Ascending aorta (tissue), 2 donors: ENCODE measurements at regions of chr15 and their contacts with region 1.

Region 1: DNA sequence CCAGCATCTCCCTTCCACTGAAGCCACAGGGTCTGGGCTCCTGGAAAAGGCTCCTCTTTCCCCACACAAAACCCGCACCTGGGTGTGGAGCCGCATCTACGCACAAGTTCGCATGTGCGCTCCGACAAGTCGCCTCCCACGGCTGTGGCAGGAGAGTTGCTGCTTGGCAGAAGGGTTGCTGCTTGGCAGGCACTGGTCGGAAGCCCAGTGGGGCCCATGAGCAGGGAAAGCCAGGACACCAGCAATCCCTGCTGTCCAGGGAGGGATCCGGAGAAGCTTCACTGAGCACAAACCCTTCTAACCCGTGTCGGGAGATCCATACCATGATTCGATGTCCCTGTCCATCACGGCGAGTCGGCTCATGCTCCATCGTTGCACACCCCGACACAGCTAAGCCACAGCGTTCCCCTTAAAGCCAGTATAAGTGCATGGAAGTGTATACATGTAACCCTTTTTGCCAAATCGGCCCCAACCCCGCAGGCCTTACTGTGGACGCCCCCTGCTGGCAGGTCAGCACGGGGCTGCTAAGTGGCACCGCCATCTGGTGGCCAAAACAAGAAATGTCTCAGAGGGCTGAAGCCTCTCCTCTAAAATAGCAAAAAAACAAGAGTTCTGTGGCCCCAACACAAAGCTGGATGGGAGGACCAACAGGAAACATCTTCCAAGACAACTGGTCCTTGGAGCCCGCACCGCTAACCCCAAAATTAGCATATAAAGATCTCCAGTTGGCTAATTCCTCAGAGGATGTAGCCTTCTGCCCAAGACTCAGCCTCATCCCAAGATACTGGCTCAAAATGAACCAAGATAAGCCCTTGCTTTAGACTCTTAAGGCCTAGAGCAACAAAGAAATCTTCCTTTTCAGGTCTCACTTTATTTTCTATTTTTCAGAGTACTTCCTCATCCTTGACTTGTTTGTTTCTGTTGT is 8.3 kb downstream of the ANKRD63 start:
- DNase-seq: peak; percentile 31 to 89
- H3K4me3 ChIP-seq: no peak overlapping the region
- H3K27ac ChIP-seq: no peak overlapping the region
- H3K4me1 ChIP-seq: peaks cover 2% of the 10 kb centered on the region in 2 donors
- H3K27me3 ChIP-seq: peaks cover 2% of the 10 kb centered on the region
- CTCF ChIP-seq: peak; percentile 100

Region 2: DNA sequence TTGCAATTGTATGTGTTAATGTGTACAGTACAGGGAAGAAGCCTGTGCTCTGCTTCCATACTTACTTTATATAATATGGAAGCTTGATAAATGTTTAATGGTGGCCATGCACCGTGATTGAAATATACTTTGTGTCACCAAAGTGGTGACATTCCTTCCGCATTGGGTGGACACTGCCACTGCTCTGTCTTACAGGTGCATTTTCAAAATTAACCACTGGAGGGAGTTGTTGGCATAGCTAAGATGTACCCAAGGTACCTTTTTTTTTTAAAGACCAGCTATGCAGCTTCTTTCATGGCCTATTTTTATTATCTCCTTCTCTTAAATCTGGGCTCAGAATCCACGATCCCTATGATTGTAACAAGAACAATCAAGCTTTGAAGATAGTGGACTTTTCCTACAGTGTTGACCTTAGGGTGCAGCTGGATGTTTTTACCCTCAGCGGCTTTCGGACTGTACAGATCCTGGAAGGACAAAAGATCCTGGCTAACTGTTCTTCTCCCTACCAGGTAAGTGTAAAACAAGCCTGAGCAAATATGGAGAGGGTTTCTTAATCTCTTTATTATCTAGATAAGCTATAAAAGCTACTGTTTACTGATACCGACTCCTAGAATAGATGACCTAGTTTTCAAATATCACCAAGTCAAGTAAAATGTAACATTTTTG is 57.3 kb before region 1 on chr15:
- intact Hi-C with region 1: loop called (anchors 1 kb)
- DNase-seq: no peak
- H3K4me3 ChIP-seq: no peak overlapping the region
- H3K27ac ChIP-seq: no peak overlapping the region
- H3K4me1 ChIP-seq: no peaks in the 10 kb centered on the region
- H3K27me3 ChIP-seq: no peaks in the 10 kb centered on the region
- CTCF ChIP-seq: peak; percentile 83 to 87 (median 85)